Posterior cingulate gyrus (tissue), 11 donors: ENCODE measurements at regions of chr15 and their contacts with region 1.

Region 1: DNA sequence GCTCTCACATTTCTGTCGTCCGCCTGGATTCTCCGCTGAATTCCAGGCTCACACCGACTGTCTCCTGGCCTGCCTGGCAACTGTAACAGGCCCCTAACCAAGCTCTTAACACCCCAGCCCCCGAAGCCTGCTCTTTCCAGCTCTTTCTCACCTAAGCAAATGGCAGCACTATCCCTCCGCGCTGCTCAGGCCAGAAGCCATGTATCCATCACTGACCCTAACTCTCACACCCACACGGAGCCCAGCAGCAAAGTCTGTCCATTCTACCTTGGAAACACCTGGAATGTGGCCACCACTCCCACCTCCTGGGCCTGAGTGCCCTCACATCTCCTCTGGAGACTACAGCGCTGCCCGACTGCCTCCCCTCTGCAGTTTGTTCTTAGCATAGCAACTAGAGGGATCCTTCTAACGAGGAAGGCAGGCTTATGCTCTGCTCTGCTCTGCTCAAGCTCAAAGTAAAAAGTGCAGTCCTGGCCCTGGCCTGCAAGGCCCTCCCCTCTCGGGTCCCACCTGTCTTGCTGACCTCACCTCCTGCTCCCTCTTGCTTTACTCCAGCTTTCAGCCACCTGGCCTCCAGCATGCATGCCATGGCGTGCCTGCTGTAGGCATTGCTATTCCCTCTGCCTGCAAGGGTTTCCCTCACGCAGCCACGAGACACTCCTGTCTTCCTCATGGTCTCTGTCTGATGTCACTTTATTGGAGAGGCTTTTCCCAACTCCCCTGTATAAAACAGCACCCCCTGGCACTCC is 27.2 kb downstream of the FEM1B start:
- DNase-seq: no peak

Region 2: DNA sequence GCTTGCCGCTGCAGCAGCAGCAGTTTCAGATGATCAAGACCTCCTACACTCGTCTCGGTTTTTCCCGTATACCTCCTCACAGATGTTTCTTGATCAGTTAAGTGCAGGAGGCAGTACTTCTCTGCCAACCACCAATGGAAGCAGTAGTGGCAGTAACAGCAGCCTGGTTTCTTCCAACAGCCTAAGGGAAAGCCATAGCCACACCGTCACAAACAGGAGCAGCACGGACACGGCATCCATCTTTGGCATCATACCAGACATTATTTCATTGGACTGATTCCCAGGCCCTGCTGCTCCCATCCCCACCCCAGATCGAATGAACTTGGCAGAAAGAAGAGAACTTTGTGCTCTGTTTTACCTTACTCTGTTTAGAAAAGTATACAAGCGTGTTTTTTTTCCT is 117.2 kb before region 1 on chr15:
- intact Hi-C with region 1: no loop called
- DNase-seq: peak in 4 of 10 donors; percentile 46 to 85 (median 68)

Region 3: DNA sequence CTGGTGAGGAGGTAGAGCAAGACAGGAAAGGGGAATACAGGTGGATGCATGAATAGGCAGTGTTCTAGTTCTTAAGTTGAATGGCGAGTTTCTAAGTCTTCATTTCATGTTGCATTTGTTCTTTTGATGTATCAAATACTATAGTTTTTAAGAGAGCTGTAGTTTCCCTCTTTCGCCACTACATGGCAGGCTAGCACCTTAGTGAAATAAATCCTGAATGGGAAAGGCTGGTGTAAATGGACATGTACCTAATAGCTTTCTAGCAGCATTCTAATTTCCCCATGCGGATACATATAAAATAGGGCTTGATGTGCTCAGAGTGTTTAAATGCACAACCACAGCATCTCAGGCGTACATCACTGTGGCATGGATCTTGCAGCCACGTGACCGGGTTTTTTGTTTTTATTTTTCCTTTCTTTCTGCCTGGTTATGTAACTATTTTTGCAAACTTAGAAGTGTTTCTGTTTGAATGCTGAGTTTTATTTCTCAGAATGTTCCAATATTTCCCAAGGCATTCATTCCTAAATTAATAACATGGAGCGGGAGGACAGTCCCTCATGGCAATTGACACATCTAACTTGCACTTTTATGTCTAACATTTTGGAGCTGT is 51.7 kb before region 1 on chr15:
- intact Hi-C with region 1: loop called (anchors 2 kb)
- DNase-seq: peak in 1 of 10 donors; percentile 35

Region 4: DNA sequence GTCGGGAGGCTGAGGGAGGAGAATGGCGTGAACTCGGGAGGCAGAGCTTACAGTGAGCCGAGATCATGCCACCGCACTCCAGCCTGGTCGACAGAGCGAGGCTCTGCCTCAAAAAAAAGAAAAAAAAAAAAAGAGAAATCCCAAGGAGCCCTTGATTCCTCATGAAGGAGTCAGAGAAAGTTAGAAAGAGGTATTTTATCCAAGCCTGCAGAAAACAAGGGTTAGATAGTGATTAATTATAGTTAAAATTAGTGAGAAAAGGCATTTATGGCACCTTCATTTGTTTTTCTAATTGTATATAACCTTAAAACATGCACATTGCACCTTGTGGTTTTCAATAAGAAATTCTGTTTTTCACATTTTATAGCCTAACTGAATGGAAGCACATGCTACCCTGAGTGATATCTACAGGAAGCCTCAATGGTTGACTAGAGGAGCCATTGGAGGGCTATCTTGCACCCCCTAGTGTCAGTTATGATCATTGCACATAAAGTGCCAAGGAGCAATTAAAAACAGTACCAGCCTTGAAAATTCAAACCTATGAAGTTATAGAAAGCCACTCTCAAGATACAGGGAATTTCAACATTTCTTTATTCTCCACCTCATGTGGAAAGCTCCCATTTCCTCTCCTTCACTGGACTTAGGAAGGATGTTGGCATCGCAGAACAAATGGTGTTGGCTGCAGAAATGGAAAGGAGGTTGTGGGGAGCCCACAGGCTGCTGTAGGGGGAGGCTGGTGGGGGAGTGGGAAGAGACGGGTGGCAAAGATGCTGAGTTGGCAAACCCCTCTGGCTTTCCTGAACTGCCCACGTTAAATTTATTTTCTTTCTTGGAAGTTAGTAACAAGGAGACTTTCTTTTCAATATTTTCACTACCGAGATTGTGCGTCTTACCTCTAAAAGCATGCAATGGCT is 78.7 kb after region 1 on chr15:
- intact Hi-C with region 1: loop called (anchors 2 kb)
- DNase-seq: peak in 1 of 10 donors; percentile 23

Region 5: DNA sequence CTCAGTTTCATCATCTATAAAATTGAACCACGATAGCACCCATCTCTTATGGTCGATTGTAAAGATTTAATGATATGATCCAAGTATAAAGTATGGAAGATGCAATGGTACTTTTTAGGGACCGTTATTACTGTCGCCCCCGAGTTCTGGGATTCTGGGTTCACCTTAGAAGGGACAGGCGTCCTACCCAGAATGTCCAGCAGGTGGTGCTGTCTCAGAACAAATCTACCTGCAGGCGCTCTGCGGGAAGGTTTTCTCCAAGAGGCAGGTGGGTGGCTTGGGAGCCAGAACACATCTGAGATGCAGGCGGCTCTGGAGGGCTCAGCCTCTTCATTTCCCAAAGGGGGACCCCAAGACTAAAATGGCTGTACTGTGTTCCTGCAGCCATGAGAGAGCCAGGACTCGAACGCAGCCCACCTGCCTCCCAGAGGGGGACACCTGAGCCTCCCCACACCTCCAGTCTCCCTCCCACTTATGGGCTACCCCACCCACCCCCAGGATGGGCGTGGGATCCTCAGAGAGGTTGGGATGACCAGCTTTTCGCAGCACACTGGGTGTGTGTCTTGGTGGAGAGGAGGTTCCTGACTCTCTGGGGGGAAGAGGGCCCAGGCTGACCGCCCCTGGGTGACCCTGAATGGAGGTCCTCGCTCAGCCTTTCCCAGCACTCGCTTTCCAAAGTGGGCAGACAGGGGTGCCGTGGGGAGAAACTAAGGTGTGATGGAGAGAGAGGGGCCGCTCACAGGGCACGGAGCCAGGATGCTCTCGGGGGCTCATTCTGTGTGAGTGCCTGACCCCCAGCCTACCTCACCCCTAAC is 245.9 kb after region 1 on chr15:
- intact Hi-C with region 1: loop called (anchors 5 kb)
- DNase-seq: peak; percentile 59 to 96 (median 88)

Region 6: GRCh38 chr15:69403594-69403993 is 1098.8 kb after region 1 on chr15:
- intact Hi-C with region 1: no loop called
- DNase-seq: no peak